Activated T-helper 1 cell treated with anti-CD3 and anti-CD28 coated beads, Interleukin-12 subunit alpha, Interleukin-12 subunit beta, Interleukin-2, Interleukin-4 antibody, amounts not matched to agents 30 ng/mL and 10 ng/mL and 1 ng/mL, durations not matched to agents 14 hours and 24 hours and 36 hours (primary cell): ENCODE measurements at regions of chr13 and their contacts with region 1.

Region 1: GRCh38 chr13:94595950-94596574 is at the start of gene TGDS:
- DNase-seq: peak; percentile 88
- H3K4me3 Mint-ChIP-seq: peak within 1 kb of the TSS; percentile 93
- H3K27ac Mint-ChIP-seq: peak within 1 kb of the TSS; percentile 95
- H3K4me1 Mint-ChIP-seq: peaks cover 40% of the 10 kb centered on the region
- H3K27me3 Mint-ChIP-seq: no peaks in the 10 kb centered on the region
- total RNA-seq, gene TGDS: 29.7 TPM in 2 replicates

Region 2: DNA sequence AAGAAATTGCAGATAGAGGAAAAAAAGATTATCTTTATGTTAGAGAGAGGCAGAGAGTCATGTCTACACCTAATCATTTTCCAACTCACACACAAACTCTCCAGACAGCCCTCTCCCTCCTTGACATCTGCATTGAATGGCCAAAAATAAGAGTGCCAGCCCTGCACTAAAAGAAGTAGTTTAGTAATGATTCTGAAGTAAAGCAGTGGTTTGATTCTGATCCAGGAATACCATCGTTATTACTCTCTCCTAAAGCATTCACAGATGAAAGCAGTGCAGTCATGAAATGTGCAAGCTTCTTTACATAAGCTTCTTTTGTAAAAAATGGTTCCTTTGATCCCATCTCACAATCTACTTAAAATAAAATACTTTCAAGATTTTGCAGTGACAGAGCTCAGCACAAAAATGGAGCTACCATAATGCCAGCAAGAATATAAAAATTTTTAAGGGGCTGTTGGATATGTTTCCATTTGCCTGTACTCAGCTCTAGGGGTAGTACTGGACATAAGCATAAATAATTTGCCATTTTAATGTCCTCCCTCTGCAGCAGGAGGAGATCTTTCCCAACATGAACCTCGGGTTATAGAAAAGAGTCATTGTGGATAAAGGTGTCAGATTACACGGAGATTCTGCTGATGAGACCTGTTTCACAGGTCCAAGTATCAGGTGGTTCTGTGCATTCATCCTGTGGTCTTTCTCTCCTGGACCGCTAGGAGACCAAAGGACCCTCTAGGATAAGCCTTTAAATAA is 522.9 kb before region 1 on chr13:
- intact Hi-C with region 1: no loop called
- DNase-seq: no peak
- H3K4me3 Mint-ChIP-seq: no peak overlapping the region
- H3K27ac Mint-ChIP-seq: no peak overlapping the region
- H3K4me1 Mint-ChIP-seq: no peaks in the 10 kb centered on the region
- H3K27me3 Mint-ChIP-seq: peaks cover 1% of the 10 kb centered on the region

Region 3: GRCh38 chr13:94558716-94559115 is 37.3 kb before region 1 on chr13:
- intact Hi-C with region 1: loop called (anchors 2 kb)
- DNase-seq: peak; percentile 28
- H3K4me3 Mint-ChIP-seq: peak overlapping the region; percentile 45
- H3K27ac Mint-ChIP-seq: peak overlapping the region; percentile 72
- H3K4me1 Mint-ChIP-seq: peaks cover 22% of the 10 kb centered on the region
- H3K27me3 Mint-ChIP-seq: no peaks in the 10 kb centered on the region

Region 4: DNA sequence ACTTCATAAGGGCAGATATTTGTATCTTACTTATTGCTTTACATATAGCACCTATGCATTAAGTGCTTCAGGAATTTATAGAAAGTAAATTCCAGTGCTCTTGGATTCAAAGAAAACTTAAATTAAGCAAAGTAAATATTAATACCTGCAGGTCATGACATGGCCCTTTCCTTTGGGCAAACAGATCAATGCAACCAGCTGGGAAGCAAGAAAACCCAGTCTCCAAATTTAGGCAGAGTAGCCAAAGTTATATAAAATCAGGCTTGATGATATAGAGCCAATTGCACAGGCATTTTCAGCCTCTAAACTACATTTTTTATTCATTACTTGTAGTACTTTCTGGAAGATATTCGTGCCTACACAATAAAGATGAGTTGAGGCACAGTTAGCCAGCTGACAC is 17.0 kb before region 1 on chr13:
- intact Hi-C with region 1: loop called (anchors 2 kb)
- DNase-seq: no peak
- H3K4me3 Mint-ChIP-seq: no peak overlapping the region
- H3K27ac Mint-ChIP-seq: no peak overlapping the region
- H3K4me1 Mint-ChIP-seq: peaks cover 1% of the 10 kb centered on the region
- H3K27me3 Mint-ChIP-seq: no peaks in the 10 kb centered on the region